HepG2 (cell line): ENCODE measurements at regions of chr4 and their contacts with region 1.

Region 1: DNA sequence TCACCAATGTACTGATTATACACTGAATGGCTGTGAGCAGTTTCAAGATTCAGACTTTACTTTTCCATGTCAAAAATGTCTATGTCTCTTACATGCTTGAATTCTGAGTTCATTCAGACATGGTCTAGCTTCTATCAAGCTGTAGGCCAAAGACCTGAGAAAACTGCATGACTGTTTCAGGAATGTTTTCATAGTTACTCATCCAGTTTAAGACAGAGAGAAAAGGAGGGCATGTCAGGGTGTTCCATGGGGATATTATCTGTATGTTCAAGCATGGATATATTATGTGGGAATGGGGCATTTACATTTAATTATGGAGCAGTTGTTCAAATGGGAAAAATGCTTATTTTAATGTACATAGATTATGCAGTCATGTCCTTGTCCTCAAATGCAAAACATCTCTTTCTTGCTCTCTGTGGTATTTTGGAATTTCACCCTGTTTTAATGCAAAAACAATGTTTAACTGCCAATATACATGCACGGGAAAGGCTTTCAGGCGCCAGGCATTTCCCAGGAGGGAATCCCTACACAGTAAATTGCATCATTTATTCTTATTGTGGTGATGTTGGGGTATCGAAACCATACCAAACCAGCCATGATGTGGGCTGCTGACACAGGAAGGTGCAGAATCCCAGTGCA is 429.1 kb upstream of the INTU start:
- DNase-seq: no peak
- ATAC-seq: no peak
- H3K4me3 ChIP-seq: no peak overlapping the region
- H3K27ac ChIP-seq: no peak overlapping the region
- H3K4me1 ChIP-seq: no peaks in the 10 kb centered on the region
- H3K27me3 ChIP-seq: no peaks in the 10 kb centered on the region
- CTCF ChIP-seq: no peak
- EP300 ChIP-seq: no peak
- POLR2A ChIP-seq: no peak
- RAD21 ChIP-seq: no peak

Region 2: GRCh38 chr4:127055357-127055756 is 148.3 kb before region 1 on chr4:
- CTCF ChIA-PET with region 1: no interaction called
- POLR2A ChIA-PET with region 1: no interaction called
- in situ Hi-C with region 1: no loop called
- intact Hi-C with region 1: loop called (anchors 10 kb)
- DNase-seq: no peak
- ATAC-seq: no peak
- H3K4me3 ChIP-seq: no peak overlapping the region
- H3K27ac ChIP-seq: no peak overlapping the region
- H3K4me1 ChIP-seq: no peaks in the 10 kb centered on the region
- H3K27me3 ChIP-seq: no peaks in the 10 kb centered on the region; a peak in 1 of 5 replicates
- CTCF ChIP-seq: no peak
- EP300 ChIP-seq: no peak
- POLR2A ChIP-seq: no peak
- RAD21 ChIP-seq: no peak

Region 3: GRCh38 chr4:127284236-127284635 is 80.6 kb after region 1 on chr4:
- CTCF ChIA-PET with region 1: no interaction called
- POLR2A ChIA-PET with region 1: no interaction called
- in situ Hi-C with region 1: no loop called
- intact Hi-C with region 1: no loop called
- DNase-seq: no peak
- ATAC-seq: no peak
- H3K4me3 ChIP-seq: no peak overlapping the region
- H3K27ac ChIP-seq: no peak overlapping the region
- H3K4me1 ChIP-seq: no peaks in the 10 kb centered on the region
- H3K27me3 ChIP-seq: no peaks in the 10 kb centered on the region
- CTCF ChIP-seq: no peak
- EP300 ChIP-seq: no peak
- POLR2A ChIP-seq: no peak
- RAD21 ChIP-seq: no peak

Region 4: GRCh38 chr4:127352220-127353113 is 148.8 kb after region 1 on chr4:
- CTCF ChIA-PET with region 1: no interaction called
- POLR2A ChIA-PET with region 1: no interaction called
- in situ Hi-C with region 1: no loop called
- intact Hi-C with region 1: no loop called
- DNase-seq: no peak
- ATAC-seq: peak; percentile 53; the same call in 2 of the 3 replicates
- H3K4me3 ChIP-seq: no peak overlapping the region
- H3K27ac ChIP-seq: no peak overlapping the region
- H3K4me1 ChIP-seq: no peaks in the 10 kb centered on the region
- H3K27me3 ChIP-seq: no peaks in the 10 kb centered on the region; a peak in 1 of 5 replicates
- CTCF ChIP-seq: no peak
- EP300 ChIP-seq: no peak
- POLR2A ChIP-seq: no peak
- RAD21 ChIP-seq: no peak